Activated CD4-positive, alpha-beta T cell treated with anti-CD3 and anti-CD28 coated beads for 36 hours (primary cell): ENCODE measurements at regions of chr6 and their contacts with region 1.

Region 1: GRCh38 chr6:50816115-50816675 is 2.5 kb upstream of the TFAP2B start:
- DNase-seq: peak; percentile 83
- ATAC-seq: no peak
- H3K4me3 Mint-ChIP-seq: peak overlapping the region; percentile 65
- H3K27ac Mint-ChIP-seq: no peak overlapping the region
- H3K4me1 Mint-ChIP-seq: peaks cover 13% of the 10 kb centered on the region
- H3K27me3 Mint-ChIP-seq: peaks cover 56% of the 10 kb centered on the region

Region 2: DNA sequence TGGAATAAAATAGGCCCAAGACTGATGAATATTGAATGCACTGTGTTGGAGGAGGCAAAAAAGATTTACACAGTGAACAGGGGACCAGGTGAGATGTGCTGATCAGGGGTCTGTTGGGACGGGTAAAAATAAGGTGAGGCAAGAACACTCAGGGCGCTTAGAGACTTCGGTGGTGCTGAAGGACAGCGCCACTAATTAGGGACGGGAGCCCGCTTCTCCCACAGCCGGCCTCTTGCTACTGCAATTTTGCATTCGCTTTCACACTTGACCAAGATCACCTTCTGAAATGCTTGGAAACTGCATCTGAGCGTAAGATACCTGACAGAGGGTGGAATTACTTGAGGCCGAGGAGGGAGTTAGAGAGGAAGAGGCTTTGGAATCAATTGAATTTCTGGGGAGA is 95.6 kb before region 1 on chr6:
- CTCF ChIA-PET with region 1: interaction called, 3 read pairs
- POLR2A ChIA-PET with region 1: no interaction called
- intact Hi-C with region 1: loop called in 1 of 2 experiments (anchors 5 kb)
- DNase-seq: no peak
- ATAC-seq: no peak
- H3K4me3 Mint-ChIP-seq: no peak overlapping the region
- H3K27ac Mint-ChIP-seq: no peak overlapping the region
- H3K4me1 Mint-ChIP-seq: peaks cover 8% of the 10 kb centered on the region
- H3K27me3 Mint-ChIP-seq: peaks cover 67% of the 10 kb centered on the region

Region 3: GRCh38 chr6:50862172-50862571 is 46.0 kb after region 1 on chr6:
- CTCF ChIA-PET with region 1: no interaction called
- POLR2A ChIA-PET with region 1: no interaction called
- intact Hi-C with region 1: no loop called
- DNase-seq: no peak
- ATAC-seq: no peak
- H3K4me3 Mint-ChIP-seq: no peak overlapping the region
- H3K27ac Mint-ChIP-seq: no peak overlapping the region
- H3K4me1 Mint-ChIP-seq: no peaks in the 10 kb centered on the region
- H3K27me3 Mint-ChIP-seq: no peaks in the 10 kb centered on the region

Region 4: GRCh38 chr6:51350308-51350904 is 534.2 kb after region 1 on chr6:
- CTCF ChIA-PET with region 1: no interaction called
- POLR2A ChIA-PET with region 1: no interaction called
- intact Hi-C with region 1: loop called (anchors 1 to 5 kb)
- DNase-seq: no peak
- ATAC-seq: no peak
- H3K4me3 Mint-ChIP-seq: no peak overlapping the region
- H3K27ac Mint-ChIP-seq: no peak overlapping the region
- H3K4me1 Mint-ChIP-seq: no peaks in the 10 kb centered on the region
- H3K27me3 Mint-ChIP-seq: no peaks in the 10 kb centered on the region

Region 5: DNA sequence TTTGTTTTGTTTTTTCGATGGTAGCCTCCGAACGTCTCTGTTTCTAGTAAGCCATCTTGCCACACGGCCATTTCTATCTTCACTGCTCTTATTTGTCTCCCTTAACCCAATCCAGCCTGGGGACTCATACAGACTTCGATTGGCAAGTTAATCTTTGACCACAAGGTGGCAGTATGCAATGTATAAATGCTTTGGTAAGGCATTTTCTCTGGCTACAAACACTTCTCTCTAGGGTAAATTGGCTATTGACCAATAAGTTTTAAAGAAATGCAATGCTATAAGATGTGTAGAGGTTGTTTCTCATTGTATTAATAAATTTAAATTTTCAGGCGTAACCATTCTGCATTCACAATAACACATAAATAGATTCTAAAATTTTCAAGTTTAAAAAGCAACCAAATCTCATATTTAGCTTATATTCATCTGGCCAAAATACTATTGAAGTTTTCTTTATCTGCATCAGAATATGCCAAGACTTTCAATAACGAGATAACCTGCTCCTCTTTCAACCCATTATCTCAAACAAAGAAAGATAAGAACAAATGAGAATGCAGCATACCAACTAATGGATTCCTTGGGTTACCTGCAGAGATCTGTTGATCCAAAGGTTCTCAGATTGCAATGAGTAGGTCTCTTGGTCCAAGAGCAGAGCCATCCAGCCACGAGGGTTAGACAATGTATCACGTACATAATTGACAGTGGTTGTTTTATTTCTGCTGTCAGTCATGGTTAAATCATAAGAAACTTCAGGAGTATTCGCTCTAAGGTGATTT is 1039.3 kb after region 1 on chr6:
- CTCF ChIA-PET with region 1: no interaction called
- POLR2A ChIA-PET with region 1: no interaction called
- intact Hi-C with region 1: loop called in 1 of 2 experiments (anchors 2 kb)
- DNase-seq: peak; percentile 18
- ATAC-seq: no peak
- H3K4me3 Mint-ChIP-seq: no peak overlapping the region
- H3K27ac Mint-ChIP-seq: no peak overlapping the region
- H3K4me1 Mint-ChIP-seq: no peaks in the 10 kb centered on the region
- H3K27me3 Mint-ChIP-seq: peaks cover 10% of the 10 kb centered on the region

Region 6: DNA sequence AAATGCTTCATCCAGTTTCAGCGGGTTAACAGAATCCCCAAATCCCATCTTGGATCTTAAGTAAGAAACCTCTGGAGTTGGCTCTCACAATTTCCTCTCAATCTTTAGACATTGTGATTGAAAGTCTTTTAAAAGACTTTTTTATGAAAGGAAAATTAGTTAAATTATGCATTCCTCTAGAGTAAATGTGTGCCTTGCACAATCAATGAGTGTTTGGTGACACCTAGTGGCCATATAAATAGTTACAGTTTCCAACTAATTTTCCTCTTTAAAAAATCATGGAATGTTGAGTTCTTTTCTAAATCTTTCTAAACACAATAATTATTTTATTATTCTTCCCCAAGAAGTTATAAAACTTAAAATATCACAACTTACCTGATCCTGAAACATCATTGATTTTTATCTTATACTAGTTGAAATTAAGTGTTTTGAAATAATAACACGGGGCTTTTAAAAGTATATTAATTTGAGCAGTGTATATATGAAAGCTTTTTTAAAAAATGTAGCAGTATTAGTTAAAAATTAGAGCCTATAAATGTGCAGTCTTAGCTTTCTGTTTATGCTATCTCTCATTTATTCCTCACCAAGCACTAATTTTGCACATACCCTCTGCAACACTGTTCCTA is 1204.9 kb after region 1 on chr6:
- CTCF ChIA-PET with region 1: interaction called, 3 read pairs
- POLR2A ChIA-PET with region 1: no interaction called
- intact Hi-C with region 1: loop called (anchors 1 to 2 kb)
- DNase-seq: no peak
- ATAC-seq: no peak
- H3K4me3 Mint-ChIP-seq: no peak overlapping the region
- H3K27ac Mint-ChIP-seq: no peak overlapping the region
- H3K4me1 Mint-ChIP-seq: no peaks in the 10 kb centered on the region
- H3K27me3 Mint-ChIP-seq: peaks cover 8% of the 10 kb centered on the region